CD8-positive, alpha-beta T cell (primary cell): ENCODE measurements at regions of chr11 and their contacts with region 1.

Region 1: GRCh38 chr11:67353317-67354074 is at the start of gene POLD4:
- DNase-seq: peak; percentile 87 to 98 (median 95)
- ATAC-seq: peak; percentile 87
- H3K4me3 ChIP-seq: peak within 1 kb of the TSS; percentile 83 to 88
- H3K4me3 Mint-ChIP-seq: peak within 1 kb of the TSS; percentile 99
- H3K27ac ChIP-seq: peak within 1 kb of the TSS; percentile 94 to 99
- H3K27ac Mint-ChIP-seq: peak within 1 kb of the TSS; percentile 100
- H3K4me1 ChIP-seq: peaks cover 45% of the 10 kb centered on the region
- H3K4me1 Mint-ChIP-seq: peaks cover 59% of the 10 kb centered on the region
- H3K27me3 ChIP-seq: no peaks in the 10 kb centered on the region
- H3K27me3 Mint-ChIP-seq: no peaks in the 10 kb centered on the region
- CTCF ChIP-seq: no peak
- total RNA-seq, gene POLD4: 32.4 to 41.9 TPM

Region 2: GRCh38 chr11:66663741-66664296 is 689.7 kb before region 1 on chr11:
- CTCF ChIA-PET with region 1: no interaction called
- POLR2A ChIA-PET with region 1: no interaction called
- intact Hi-C with region 1: no loop called
- DNase-seq: no peak
- ATAC-seq: no peak
- H3K4me3 ChIP-seq: no peak overlapping the region
- H3K4me3 Mint-ChIP-seq: no peak overlapping the region
- H3K27ac ChIP-seq: no peak overlapping the region
- H3K27ac Mint-ChIP-seq: peak overlapping the region; percentile 22
- H3K4me1 ChIP-seq: no peaks in the 10 kb centered on the region
- H3K4me1 Mint-ChIP-seq: peaks cover 47% of the 10 kb centered on the region
- H3K27me3 ChIP-seq: no peaks in the 10 kb centered on the region
- H3K27me3 Mint-ChIP-seq: no peaks in the 10 kb centered on the region
- CTCF ChIP-seq: no peak

Region 3: DNA sequence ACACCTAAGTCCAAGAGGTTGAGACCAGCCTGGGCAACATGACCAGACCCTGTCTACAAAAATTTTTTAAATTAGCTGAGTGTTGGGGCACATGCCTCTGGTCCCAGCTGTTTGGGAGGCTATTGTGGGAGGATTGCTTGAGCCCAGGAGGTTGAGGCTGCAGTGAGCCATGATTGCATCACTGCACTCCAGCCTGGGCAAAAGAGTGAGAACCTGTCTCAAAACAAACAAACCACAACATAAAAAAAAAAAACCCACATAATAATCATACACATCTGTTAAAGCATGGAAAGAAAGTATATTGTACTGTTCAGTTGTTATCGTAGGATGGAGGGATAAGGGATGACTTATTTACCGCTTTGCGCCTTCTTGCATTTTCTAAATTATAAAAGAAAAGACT is 123.1 kb before region 1 on chr11:
- CTCF ChIA-PET with region 1: interaction called, 10 read pairs
- POLR2A ChIA-PET with region 1: no interaction called
- intact Hi-C with region 1: no loop called
- DNase-seq: no peak
- ATAC-seq: no peak
- H3K4me3 ChIP-seq: no peak overlapping the region
- H3K4me3 Mint-ChIP-seq: no peak overlapping the region
- H3K27ac ChIP-seq: peak overlapping the region in 1 of 2 experiments; percentile 30
- H3K27ac Mint-ChIP-seq: no peak overlapping the region
- H3K4me1 ChIP-seq: no peaks in the 10 kb centered on the region
- H3K4me1 Mint-ChIP-seq: peaks cover 18% of the 10 kb centered on the region
- H3K27me3 ChIP-seq: no peaks in the 10 kb centered on the region
- H3K27me3 Mint-ChIP-seq: no peaks in the 10 kb centered on the region
- CTCF ChIP-seq: no peak

Region 4: DNA sequence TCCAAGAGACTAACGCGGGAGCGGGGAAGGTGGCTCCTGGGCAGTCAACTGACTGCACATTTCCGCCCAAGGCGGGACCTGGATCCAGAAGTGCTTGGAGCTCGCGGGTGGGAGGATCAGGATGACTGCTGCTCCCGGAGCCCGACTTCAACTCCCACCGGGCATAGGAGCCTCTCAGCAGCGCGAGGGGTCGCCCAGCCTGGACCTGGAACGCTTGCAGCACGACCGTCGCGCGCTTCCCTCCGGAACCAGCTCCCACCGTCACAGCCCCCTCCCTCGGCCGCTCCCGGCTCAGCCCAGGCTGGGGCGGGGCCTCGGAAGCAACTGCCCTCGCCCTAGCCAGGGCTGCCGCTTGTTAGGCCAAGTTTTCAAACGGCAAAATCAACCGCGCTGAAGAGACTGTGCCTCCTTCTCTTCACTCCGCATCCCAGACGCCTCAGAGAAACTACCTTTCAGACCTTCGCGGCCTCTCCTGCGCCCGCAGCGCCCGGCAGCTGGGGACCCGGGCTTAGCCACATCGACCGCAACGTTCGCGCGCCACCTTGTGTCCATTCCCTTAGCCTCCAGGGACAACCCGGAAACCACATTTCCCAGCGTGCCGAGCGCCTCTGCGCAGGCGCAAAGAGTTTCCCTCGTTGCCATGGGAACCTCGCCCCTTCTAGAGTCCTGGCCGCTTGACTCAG is 36.1 kb before region 1 on chr11:
- CTCF ChIA-PET with region 1: interaction called, 88 read pairs
- POLR2A ChIA-PET with region 1: interaction called, 7 read pairs
- intact Hi-C with region 1: loop called in 1 of 2 experiments (anchors 1 kb)
- DNase-seq: peak; percentile 96 to 99 (median 98)
- ATAC-seq: peak; percentile 76
- H3K4me3 ChIP-seq: peak overlapping the region; percentile 68 to 82
- H3K4me3 Mint-ChIP-seq: peak overlapping the region; percentile 97
- H3K27ac ChIP-seq: peak overlapping the region; percentile 63 to 73
- H3K27ac Mint-ChIP-seq: peak overlapping the region; percentile 94
- H3K4me1 ChIP-seq: peaks cover 23% of the 10 kb centered on the region
- H3K4me1 Mint-ChIP-seq: peaks cover 32% of the 10 kb centered on the region
- H3K27me3 ChIP-seq: no peaks in the 10 kb centered on the region
- H3K27me3 Mint-ChIP-seq: no peaks in the 10 kb centered on the region
- CTCF ChIP-seq: peak; percentile 70

Region 5: GRCh38 chr11:67391304-67392132 is 38.0 kb after region 1 on chr11 and contains the start of gene RAD9A:
- CTCF ChIA-PET with region 1: interaction called, 1,319 read pairs
- POLR2A ChIA-PET with region 1: interaction called, 12 read pairs
- intact Hi-C with region 1: no loop called
- DNase-seq: peak; percentile 81 to 97 (median 93)
- ATAC-seq: peak; percentile 77
- H3K4me3 ChIP-seq: peak within 1 kb of the TSS; percentile 77 to 85
- H3K4me3 Mint-ChIP-seq: peak within 1 kb of the TSS; percentile 87
- H3K27ac ChIP-seq: peak within 1 kb of the TSS; percentile 62 to 87
- H3K27ac Mint-ChIP-seq: peak within 1 kb of the TSS; percentile 81
- H3K4me1 ChIP-seq: peaks cover 26% of the 10 kb centered on the region
- H3K4me1 Mint-ChIP-seq: peaks cover 35% of the 10 kb centered on the region
- H3K27me3 ChIP-seq: no peaks in the 10 kb centered on the region
- H3K27me3 Mint-ChIP-seq: no peaks in the 10 kb centered on the region
- CTCF ChIP-seq: no peak
- total RNA-seq, gene RAD9A: 13.7 to 14.1 TPM

Region 6: DNA sequence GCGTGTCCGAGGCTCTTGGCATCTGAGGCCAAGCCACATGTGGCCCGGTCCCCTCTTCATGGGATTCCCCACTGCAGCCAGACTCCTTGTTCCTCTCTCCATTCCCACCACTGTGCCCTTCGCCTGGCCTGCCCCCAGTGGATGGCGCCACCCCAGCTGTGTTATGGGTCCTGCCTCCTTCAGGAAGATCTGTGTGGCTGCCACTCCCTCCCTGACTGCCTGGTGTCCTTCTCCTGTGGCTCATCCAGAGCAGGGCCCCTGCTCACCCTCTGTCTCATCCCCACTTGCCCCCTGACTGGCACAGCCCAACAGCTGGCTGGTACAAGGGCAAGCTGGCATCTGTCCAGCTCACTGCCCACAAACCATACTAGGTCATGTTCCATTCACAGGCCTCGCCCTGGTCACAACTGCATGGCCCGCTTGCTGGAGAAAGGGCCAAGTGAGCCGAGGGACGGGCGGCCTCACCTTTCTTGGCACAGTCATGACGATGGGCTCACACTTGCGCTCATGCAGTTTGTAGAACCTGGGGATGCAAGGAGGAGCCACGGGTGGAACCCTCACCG is 85.9 kb after region 1 on chr11:
- CTCF ChIA-PET with region 1: interaction called, 9 read pairs
- POLR2A ChIA-PET with region 1: interaction called, 15 read pairs
- intact Hi-C with region 1: no loop called
- DNase-seq: peak in 3 of 9 experiments; percentile 32 to 65 (median 53)
- ATAC-seq: no peak
- H3K4me3 ChIP-seq: peak overlapping the region; percentile 77 to 98
- H3K4me3 Mint-ChIP-seq: peak overlapping the region; percentile 89
- H3K27ac ChIP-seq: peak overlapping the region; percentile 34 to 67
- H3K27ac Mint-ChIP-seq: peak overlapping the region; percentile 94
- H3K4me1 ChIP-seq: peaks cover 64% of the 10 kb centered on the region
- H3K4me1 Mint-ChIP-seq: peaks cover 60% of the 10 kb centered on the region
- H3K27me3 ChIP-seq: no peaks in the 10 kb centered on the region
- H3K27me3 Mint-ChIP-seq: no peaks in the 10 kb centered on the region
- CTCF ChIP-seq: no peak

Region 7: DNA sequence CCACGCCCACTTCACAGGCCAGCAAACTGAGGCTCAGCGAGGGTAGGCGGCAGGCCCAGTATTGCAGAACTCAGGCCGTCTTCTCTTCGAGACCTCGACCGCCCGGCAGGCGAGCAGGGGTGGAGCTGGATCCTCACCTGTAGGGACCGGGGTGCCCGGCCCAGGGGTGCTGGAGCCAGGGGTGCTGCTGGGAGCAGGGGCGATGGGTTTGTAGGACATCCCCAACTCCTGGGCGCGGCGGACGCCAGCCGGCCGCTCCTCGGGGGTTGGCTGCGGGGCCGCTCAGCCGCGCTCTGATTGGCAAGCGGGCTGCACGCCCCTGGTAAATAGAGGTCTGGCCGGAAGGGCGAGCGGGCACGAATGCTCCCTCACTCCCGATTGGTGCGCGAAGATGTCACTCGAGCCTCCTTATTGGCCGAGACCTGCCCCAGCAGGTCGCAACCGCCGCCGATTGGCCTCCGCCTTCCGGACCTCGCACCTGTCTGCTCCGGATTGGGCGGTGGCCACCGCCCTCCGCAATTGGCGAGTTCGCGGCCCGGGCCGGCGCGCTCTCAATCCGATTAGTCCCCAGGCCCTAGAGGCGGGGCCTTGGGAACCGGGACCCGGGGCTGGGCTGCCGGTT is 154.5 kb after region 1 on chr11 and contains the start of gene CDK2AP2:
- CTCF ChIA-PET with region 1: interaction called, 4 read pairs
- POLR2A ChIA-PET with region 1: no interaction called
- intact Hi-C with region 1: loop called (anchors 1 kb)
- DNase-seq: peak; percentile 93 to 99 (median 97)
- ATAC-seq: peak; percentile 69
- H3K4me3 ChIP-seq: peak within 1 kb of the TSS; percentile 66 to 97
- H3K4me3 Mint-ChIP-seq: peak within 1 kb of the TSS; percentile 90
- H3K27ac ChIP-seq: peak within 1 kb of the TSS; percentile 97
- H3K27ac Mint-ChIP-seq: peak within 1 kb of the TSS; percentile 97
- H3K4me1 ChIP-seq: peaks cover 42% of the 10 kb centered on the region
- H3K4me1 Mint-ChIP-seq: peaks cover 38% of the 10 kb centered on the region
- H3K27me3 ChIP-seq: no peaks in the 10 kb centered on the region
- H3K27me3 Mint-ChIP-seq: peaks cover 6% of the 10 kb centered on the region
- CTCF ChIP-seq: no peak
- total RNA-seq, gene CDK2AP2: 19.4 to 24.4 TPM